A673 (cell line): ENCODE measurements at regions of chr2 and their contacts with region 1.

Region 1: GRCh38 chr2:5846881-5847280 is 154.7 kb downstream of the SOX11 start:
- DNase-seq: peak; percentile 86
- H3K4me3 ChIP-seq: no peak overlapping the region
- H3K27ac ChIP-seq: peak overlapping the region; percentile 46
- H3K4me1 ChIP-seq: peaks cover 6% of the 10 kb centered on the region
- H3K27me3 ChIP-seq: no peaks in the 10 kb centered on the region
- CTCF ChIP-seq: no peak

Region 2: GRCh38 chr2:4973973-4974372 is 872.9 kb before region 1 on chr2:
- CTCF ChIA-PET with region 1: no interaction called
- POLR2A ChIA-PET with region 1: interaction called, 19 read pairs
- intact Hi-C with region 1: no loop called
- DNase-seq: no peak
- H3K4me3 ChIP-seq: no peak overlapping the region
- H3K27ac ChIP-seq: no peak overlapping the region
- H3K4me1 ChIP-seq: no peaks in the 10 kb centered on the region
- H3K27me3 ChIP-seq: no peaks in the 10 kb centered on the region
- CTCF ChIP-seq: no peak

Region 3: GRCh38 chr2:5035057-5035488 is 811.8 kb before region 1 on chr2:
- CTCF ChIA-PET with region 1: no interaction called
- POLR2A ChIA-PET with region 1: no interaction called
- intact Hi-C with region 1: no loop called
- DNase-seq: no peak
- H3K4me3 ChIP-seq: no peak overlapping the region
- H3K27ac ChIP-seq: no peak overlapping the region
- H3K4me1 ChIP-seq: no peaks in the 10 kb centered on the region
- H3K27me3 ChIP-seq: no peaks in the 10 kb centered on the region
- CTCF ChIP-seq: no peak

Region 4: GRCh38 chr2:6017736-6018286 is 170.9 kb after region 1 on chr2:
- CTCF ChIA-PET with region 1: no interaction called
- POLR2A ChIA-PET with region 1: no interaction called
- intact Hi-C with region 1: no loop called
- DNase-seq: no peak
- H3K4me3 ChIP-seq: no peak overlapping the region
- H3K27ac ChIP-seq: no peak overlapping the region
- H3K4me1 ChIP-seq: no peaks in the 10 kb centered on the region
- H3K27me3 ChIP-seq: no peaks in the 10 kb centered on the region
- CTCF ChIP-seq: no peak